ENCODE measurements at regions of chr20 and their contacts with region 1.

Region 1: GRCh38 chr20:47379433-47380150 is 23.1 kb upstream of the ZMYND8 start:
- DNase-seq: no peak
- H3K4me3 ChIP-seq: no peak overlapping the region
- H3K27ac ChIP-seq: no peak overlapping the region
- H3K4me1 ChIP-seq: peaks cover 7% of the 10 kb centered on the region
- H3K27me3 ChIP-seq: no peaks in the 10 kb centered on the region
- CTCF ChIP-seq: no peak
- POLR2A ChIP-seq: no peak

Region 2: DNA sequence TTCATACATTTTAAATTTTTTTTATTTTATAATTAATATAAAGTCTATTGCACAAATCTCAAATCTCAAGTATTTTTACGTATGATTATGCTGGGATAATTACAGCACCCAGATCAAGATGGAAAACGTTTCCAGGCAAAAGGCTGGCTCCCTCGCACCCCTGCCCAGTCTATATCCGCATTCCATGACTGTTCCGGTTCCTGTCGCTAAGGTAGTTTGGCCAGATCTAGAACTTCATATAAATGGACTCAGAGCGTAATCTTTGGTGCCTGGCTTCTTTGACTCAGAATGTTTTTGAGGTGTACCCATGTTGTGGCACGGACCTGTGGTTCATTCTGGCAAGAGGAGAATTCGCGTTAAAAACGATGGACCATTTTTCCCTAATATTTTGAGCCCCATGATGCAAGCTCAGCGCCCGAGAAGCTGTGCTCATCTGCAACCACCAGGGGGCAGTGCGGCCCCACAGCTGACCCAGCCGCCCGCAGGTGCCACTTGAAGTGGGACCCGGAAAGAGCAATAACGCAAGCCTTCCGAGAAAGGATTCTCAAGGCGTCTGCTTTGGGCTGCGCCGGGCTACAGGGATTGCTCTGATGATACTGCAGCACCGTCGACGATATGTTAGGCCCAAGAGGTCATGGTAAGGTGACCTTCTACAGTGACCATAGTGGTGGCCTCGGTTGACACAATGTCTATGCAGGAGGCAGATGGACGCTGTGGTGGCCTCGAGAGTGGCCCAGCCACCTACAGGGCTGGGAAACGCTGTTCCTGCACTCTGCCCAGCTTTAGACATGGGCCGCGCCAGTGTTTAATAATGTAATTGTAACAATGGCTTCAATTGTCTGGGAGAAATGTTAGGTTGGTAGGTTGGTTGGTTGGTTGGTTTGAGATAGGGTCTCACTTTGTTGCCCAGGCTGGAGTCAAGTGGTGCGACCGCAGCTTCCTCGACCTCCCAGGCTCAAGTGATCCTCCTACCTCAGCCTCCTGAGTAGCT is 183.2 kb before region 1 on chr20:
- intact Hi-C with region 1: loop called (anchors 5 kb)
- DNase-seq: peak; percentile 82
- H3K4me3 ChIP-seq: no peak overlapping the region
- H3K27ac ChIP-seq: no peak overlapping the region
- H3K4me1 ChIP-seq: peaks cover 9% of the 10 kb centered on the region
- H3K27me3 ChIP-seq: no peaks in the 10 kb centered on the region
- CTCF ChIP-seq: peak; percentile 92 to 98 (median 97)
- POLR2A ChIP-seq: no peak

Region 3: DNA sequence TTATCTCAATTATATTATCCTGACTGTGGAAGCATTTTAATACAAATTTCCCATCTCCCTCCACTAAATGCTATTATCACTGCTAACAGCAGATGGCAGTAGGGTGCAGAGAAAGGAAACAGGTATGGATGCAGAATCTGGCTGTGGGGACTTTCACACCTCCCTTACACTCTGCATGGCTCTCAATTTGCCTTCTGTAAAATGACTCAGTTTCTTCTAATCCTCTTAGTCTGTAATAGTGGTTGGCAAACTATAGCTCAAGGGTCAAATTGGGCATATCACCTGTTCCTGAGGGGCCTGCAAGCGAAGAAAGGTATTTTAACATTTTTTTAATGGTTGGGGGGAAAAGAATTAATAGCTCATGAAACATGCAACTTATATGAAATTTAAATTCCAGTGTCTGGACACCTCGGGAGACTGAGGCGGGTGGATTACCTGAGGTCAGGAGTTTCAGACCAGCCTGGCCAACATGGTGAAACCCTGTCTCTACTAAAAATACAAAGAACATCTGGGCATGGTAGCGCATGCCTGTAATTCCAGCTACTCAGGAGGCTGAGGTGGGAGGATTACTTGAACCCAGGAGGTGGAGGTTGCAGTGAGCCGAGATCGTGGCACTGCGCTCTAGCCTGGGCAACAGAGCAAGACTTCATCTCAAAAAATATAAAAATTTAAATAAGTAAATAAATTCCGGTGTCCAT is 106.5 kb before region 1 on chr20:
- intact Hi-C with region 1: loop called (anchors 2 kb)
- DNase-seq: peak; percentile 57
- H3K4me3 ChIP-seq: no peak overlapping the region
- H3K27ac ChIP-seq: peak overlapping the region in 1 of 2 donors; percentile 81
- H3K4me1 ChIP-seq: peaks cover 33% of the 10 kb centered on the region
- H3K27me3 ChIP-seq: no peaks in the 10 kb centered on the region
- CTCF ChIP-seq: peak; percentile 91 to 95 (median 93)
- POLR2A ChIP-seq: no peak